ENCODE measurements at regions of chr15 and their contacts with region 1.

Region 1: DNA sequence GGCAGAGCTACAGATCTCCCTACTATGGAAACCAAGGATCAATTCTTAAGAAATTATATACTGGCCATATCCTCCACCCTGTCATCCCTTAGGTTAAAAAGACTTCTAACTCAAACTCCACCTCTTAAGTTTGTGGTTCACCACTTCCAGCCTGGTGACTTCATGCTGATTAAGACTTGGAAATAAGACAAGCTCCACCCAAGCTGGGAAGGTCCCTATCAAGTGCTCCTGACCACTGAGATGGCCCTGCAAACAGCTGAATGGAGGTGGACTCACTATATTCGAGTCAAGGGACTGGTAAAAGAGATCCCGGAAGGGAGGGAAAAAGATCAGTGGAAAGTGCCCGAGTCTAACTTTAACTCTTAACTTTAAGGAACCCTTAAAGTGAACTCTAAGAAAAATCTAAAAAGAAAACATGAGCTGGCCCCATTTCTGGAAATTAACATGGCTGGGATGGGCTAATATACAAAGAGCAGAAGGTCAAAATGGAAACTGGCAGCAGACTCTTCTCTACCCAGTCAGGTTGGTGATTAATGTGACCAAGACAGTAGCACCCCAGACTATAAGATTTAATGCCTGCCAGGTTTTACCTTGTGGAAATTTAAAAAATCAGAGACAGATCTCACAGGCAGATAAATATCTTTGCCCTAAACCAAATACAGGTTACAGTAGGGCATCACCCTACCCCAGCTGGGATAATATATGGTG is 43.9 kb downstream of the PPCDC start:
- DNase-seq: peak; percentile 73
- H3K4me3 Mint-ChIP-seq: no peak overlapping the region
- H3K27ac Mint-ChIP-seq: peak overlapping the region; percentile 47
- H3K4me1 Mint-ChIP-seq: peaks cover 36% of the 10 kb centered on the region
- H3K27me3 Mint-ChIP-seq: peaks cover 1% of the 10 kb centered on the region

Region 2: DNA sequence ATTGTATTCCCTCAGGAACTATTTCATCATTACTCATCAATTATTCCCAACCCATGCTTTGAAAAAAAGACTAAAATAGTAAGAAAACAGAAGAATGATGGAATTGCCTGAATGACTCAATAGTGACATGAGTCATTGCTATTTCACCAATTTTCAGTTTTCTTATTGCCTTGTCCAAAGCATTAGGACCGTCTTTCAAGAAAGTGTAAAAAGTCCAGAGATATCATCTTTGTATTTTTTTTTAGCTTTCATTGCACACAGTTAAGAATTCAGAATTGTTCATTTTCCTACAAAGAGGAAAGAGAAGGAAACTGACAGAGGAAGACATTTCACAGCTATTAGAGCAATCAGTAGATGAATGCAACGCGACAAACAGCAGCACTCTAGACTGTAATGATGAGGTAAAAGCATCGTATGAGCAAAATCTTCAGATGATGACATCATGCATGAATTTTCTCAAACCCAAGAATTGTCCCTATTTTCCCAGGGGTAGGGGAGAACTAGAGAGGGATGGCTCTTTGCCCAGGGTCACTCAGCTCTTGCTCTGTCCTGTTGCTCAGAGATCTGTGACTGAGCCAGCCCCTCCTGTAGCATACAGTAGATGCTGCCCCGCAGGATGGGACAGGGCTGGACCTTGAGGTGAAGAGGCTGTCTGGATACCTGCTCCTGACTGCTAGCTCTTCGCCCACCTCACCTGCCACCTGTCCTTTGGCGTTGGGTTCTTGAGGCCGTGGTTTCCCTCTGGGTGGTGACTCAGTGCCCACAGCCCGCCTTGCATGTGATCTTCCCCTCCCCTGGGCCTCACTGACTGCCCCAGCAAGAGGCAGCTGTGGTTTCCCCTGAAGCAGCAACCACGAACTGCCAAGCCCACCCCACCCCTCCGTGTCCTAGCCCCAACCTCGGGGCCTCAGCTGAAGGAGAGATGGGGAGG is 40.9 kb after region 1 on chr15:
- CTCF ChIA-PET with region 1: no interaction called
- POLR2A ChIA-PET with region 1: interaction called, 3 read pairs
- intact Hi-C with region 1: loop called (anchors 1 kb)
- DNase-seq: peak; percentile 84
- H3K4me3 Mint-ChIP-seq: no peak overlapping the region
- H3K27ac Mint-ChIP-seq: peak overlapping the region; percentile 40
- H3K4me1 Mint-ChIP-seq: peaks cover 26% of the 10 kb centered on the region
- H3K27me3 Mint-ChIP-seq: peaks cover 8% of the 10 kb centered on the region

Region 3: DNA sequence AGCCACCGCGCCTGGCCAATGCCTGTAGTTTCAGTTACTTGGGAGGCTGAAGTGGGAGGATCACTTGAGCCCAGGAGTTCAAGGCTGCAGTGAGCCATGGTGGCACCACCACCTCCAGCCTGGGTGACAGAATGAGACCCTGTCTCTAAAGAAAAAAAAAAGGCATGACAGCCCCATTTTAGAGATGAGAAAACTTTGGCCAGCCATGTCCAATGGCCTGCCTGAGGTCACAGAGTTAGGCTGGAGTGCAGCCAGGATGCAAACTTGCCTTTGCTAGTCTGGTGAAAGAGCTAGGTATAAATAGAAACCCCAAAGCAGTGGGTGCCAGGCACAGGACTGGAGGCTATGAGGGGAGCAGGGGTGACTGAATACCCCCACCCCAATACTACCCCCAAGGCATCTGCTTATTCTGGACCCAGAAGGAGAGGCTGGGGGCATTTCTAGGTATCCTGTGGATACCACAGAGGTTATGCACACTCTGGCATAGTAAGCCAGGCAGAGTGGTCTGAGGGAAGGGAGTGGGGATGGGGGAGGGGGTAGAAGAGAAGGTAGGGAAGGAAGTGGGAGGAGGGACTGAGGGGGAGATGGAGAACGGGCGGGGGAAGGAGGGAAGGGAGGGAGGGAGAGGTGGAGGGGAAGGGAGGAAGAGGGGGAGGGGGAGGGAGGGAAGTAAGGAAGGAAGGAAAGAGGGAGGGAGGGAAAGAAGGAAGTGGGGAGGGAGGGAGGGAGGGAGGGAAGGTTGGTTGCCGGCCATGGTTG is 118.2 kb after region 1 on chr15:
- CTCF ChIA-PET with region 1: no interaction called
- POLR2A ChIA-PET with region 1: no interaction called
- intact Hi-C with region 1: no loop called
- DNase-seq: no peak
- H3K4me3 Mint-ChIP-seq: no peak overlapping the region
- H3K27ac Mint-ChIP-seq: no peak overlapping the region
- H3K4me1 Mint-ChIP-seq: no peaks in the 10 kb centered on the region
- H3K27me3 Mint-ChIP-seq: peaks cover 20% of the 10 kb centered on the region